ENCODE measurements at regions of chr13 and their contacts with region 1.

Region 1: GRCh38 chr13:41456768-41457588 is at the start of gene RGCC:
- DNase-seq: peak; percentile 97
- H3K4me3 Mint-ChIP-seq: peak within 1 kb of the TSS; percentile 87
- H3K27ac Mint-ChIP-seq: peak within 1 kb of the TSS; percentile 97
- H3K4me1 Mint-ChIP-seq: peaks cover 41% of the 10 kb centered on the region
- H3K27me3 Mint-ChIP-seq: peaks cover 2% of the 10 kb centered on the region
- total RNA-seq, gene RGCC: 94.8 to 96.8 TPM

Region 2: DNA sequence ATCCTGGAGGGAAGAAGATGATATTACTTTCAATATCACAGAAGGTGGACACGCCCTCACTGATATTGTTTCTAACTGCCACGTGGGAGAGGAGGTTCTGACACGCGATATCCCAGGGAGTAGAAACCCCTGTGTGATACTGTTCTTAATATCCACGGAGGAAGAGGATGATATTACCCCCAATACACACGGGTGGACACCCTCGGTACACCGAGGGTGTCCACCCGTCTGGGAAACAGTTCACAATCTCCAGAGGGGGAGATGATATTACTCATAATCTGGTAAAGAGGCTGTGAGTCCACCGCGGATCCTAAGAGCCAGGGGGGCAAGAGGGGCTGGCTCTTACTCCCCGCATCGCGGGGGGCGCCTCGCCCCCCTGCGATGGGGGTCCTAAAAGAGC is 29.3 kb before region 1 on chr13:
- CTCF ChIA-PET with region 1: no interaction called
- POLR2A ChIA-PET with region 1: no interaction called
- intact Hi-C with region 1: loop called (anchors 2 kb)
- DNase-seq: no peak
- H3K4me3 Mint-ChIP-seq: peak overlapping the region; percentile 15
- H3K27ac Mint-ChIP-seq: no peak overlapping the region
- H3K4me1 Mint-ChIP-seq: peaks cover 4% of the 10 kb centered on the region
- H3K27me3 Mint-ChIP-seq: peaks cover 6% of the 10 kb centered on the region

Region 3: DNA sequence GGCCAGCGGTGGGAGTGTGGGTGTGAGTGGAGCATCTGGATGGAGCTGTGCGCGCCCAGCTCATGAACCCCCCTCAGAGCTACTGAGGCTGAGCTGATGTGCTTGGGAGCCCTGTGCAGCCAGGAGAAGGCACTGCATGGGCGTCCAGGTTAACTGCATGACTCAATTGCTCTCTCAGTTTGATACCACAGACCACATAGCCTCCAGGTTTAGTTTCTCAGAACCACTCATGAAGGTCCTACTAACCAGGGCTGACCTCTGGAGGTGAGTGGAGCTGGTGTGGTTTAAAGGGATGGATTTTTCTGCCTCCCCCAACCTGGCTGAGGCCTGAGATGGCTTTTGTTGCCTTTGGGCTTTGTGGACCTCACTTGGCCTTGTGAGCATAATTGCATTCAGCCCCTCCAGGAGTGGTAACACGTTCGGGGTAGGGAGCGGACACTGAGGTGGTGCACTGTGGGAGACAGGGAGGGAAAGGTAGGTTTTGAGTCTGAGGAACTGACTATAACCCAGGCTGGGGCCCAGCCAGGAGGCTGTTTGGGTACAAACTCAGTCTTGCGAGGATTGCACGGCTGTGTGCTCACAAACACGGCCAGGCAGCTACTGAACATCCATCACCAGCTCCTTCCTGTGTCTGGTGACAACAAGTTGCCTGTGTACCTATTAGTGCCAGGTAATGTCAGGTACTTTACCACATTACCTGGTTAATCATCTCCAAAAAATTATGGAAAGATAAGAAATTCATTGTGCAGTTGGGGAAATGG is 97.8 kb after region 1 on chr13:
- CTCF ChIA-PET with region 1: interaction called, 20 read pairs
- POLR2A ChIA-PET with region 1: no interaction called
- intact Hi-C with region 1: loop called (anchors 1 kb)
- DNase-seq: peak; percentile 77
- H3K4me3 Mint-ChIP-seq: no peak overlapping the region
- H3K27ac Mint-ChIP-seq: peak overlapping the region; percentile 9
- H3K4me1 Mint-ChIP-seq: peaks cover 21% of the 10 kb centered on the region
- H3K27me3 Mint-ChIP-seq: peaks cover 2% of the 10 kb centered on the region

Region 4: DNA sequence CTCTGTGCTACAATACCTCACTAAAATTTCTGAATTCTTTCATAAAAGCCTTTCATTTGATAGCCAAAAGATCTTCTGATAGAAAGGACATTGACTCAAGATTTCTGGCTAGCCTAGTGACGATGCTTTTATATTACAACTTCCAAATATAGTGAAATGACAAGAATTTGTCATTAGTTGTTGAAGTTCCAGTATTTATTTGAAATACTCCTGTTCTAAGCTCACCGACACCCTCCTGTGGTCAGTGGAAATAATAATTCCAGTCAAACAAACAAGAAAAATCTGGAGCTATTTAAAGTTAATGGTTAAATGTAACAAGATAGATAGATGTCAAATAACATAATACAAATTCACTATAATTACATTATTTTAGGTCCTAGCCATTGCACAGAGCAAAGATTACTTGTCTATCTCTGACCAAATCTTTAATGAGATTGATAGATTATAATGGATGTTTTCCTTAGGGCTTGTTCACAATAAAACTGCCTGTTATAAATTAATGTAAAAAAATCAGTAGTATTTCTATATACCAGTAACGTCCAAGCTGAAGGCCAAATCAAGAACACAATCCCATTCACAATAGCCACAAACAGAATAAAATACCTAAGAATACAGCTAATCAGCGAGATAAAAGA is 195.9 kb after region 1 on chr13:
- CTCF ChIA-PET with region 1: interaction called, 18 read pairs
- POLR2A ChIA-PET with region 1: interaction called, 3 read pairs
- intact Hi-C with region 1: loop called (anchors 2 kb)
- DNase-seq: peak; percentile 33
- H3K4me3 Mint-ChIP-seq: no peak overlapping the region
- H3K27ac Mint-ChIP-seq: no peak overlapping the region
- H3K4me1 Mint-ChIP-seq: peaks cover 16% of the 10 kb centered on the region
- H3K27me3 Mint-ChIP-seq: no peaks in the 10 kb centered on the region

Measured in activated CD4-positive, alpha-beta memory T cell treated with anti-CD3 and anti-CD28 coated beads for 36 hours (primary cell).